ENCODE measurements at regions of chr1 and their contacts with region 1.

Region 1: DNA sequence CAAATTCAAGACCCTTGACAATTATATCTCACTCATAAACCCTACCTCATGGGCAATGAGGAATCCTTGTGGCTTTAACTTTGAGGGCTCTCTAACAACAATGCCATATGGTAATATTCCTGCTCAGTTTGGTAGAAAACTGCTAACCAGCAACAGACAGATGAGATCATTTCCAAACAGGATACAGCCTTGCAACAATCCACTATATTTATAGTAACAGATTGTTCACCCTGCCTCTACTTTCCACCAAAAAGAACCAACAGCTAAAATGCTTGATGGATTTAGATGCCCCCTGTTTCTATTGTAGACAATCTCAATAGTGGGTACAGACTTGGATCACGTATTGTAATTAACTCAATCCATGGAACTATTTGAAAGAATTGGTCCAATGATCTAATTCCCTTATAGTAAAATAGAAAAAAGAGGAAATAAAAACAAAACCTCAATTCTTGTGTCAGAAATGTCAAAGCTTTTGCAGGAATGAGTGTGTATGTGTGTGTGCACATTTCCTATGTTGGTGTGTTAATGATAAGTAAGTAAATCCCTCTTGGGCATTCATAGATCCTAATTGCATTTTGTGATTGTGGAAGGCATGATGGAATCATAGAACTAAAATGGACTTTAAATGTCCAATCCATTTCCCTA is 100.0 kb upstream of the EDEM3 start:
- DNase-seq: no peak
- H3K4me3 ChIP-seq: no peak overlapping the region
- H3K27ac ChIP-seq: no peak overlapping the region
- H3K4me1 ChIP-seq: no peaks in the 10 kb centered on the region
- H3K27me3 ChIP-seq: no peaks in the 10 kb centered on the region
- CTCF ChIP-seq: no peak

Region 2: DNA sequence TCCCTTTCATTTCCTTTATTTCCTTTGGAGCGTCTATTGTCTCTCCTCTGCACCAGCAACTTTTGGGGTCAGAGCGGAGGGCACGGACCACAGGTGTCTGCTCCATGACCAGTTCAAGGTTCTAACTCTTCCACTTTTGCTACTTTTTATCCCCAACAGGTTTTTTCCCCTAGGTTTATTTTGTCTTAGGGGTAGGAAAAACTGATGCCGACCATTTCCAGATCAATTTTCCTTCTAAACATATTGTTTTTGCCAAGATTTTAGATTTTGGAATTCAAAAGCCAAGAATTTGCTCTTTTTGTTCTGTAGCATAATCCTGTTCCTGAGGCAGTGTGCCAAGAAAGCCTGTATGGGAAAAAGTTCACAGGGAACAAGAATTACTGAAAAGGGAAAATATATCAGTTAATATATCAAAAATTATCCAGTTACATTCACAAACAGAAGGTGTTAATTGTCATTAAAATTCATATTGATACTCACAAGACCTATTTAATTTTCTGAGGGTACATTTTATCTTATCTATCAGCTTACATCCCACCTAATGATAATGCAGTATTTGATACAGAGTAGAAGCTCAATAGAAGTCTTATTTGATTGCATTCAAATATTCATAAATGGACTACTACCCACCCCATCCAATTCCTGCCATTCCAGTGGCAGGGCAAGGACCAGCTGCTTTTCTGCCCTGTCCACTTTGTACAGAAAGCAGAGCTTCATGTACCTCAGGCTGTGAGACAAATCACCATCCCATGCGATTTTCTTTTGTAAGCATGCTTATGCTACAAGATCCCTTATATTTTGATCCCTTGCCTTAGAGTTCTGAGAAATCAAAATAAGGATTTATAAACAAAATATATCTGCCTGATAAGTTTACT is 771.8 kb before region 1 on chr1:
- CTCF ChIA-PET with region 1: no interaction called
- POLR2A ChIA-PET with region 1: no interaction called
- intact Hi-C with region 1: no loop called
- DNase-seq: no peak
- H3K4me3 ChIP-seq: no peak overlapping the region
- H3K27ac ChIP-seq: no peak overlapping the region
- H3K4me1 ChIP-seq: peaks cover 13% of the 10 kb centered on the region
- H3K27me3 ChIP-seq: no peaks in the 10 kb centered on the region
- CTCF ChIP-seq: no peak

Region 3: GRCh38 chr1:184838489-184838951 is 16.1 kb before region 1 on chr1:
- CTCF ChIA-PET with region 1: no interaction called
- POLR2A ChIA-PET with region 1: no interaction called
- intact Hi-C with region 1: loop called (anchors 2 kb)
- DNase-seq: peak; percentile 38
- H3K4me3 ChIP-seq: no peak overlapping the region
- H3K27ac ChIP-seq: peak overlapping the region; percentile 1
- H3K4me1 ChIP-seq: peaks cover 9% of the 10 kb centered on the region
- H3K27me3 ChIP-seq: no peaks in the 10 kb centered on the region
- CTCF ChIP-seq: no peak

Region 4: DNA sequence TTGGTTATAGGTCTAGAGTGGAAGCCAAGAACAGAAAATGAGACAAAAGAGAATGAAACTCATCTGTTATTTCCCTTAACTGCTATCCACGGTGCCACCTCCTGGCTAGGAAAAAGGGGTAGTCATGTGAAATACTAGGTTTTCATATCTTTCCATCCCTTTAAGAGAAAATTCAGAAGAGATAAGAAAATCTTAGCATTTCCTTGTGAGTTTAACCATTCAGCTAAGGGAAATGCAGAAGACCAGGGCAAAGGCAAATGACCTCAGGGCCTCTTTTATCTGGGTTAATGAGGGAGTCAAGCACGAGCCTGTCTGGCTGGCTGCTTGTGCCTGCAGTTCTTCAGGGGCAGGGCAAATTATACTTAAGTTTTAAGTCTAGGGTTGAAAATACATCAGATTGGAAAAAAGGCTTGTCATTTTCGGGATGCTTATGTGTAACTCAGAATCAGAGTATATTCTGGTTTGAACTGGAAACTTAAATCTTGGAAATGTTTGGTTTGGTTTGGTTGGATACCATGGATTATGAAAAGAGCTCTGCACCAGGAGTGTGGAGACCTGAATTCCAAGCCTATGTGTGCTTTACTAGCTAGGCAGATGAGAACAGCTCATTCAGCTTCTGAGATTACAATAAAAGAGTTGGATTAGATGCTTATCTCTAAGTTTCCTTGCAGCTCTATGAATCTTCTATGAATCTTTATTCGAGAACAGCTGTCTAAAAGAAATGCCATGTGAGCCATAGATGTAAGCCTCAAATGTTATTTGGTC is 99.8 kb after region 1 on chr1:
- CTCF ChIA-PET with region 1: no interaction called
- POLR2A ChIA-PET with region 1: no interaction called
- intact Hi-C with region 1: no loop called
- DNase-seq: no peak
- H3K4me3 ChIP-seq: no peak overlapping the region
- H3K27ac ChIP-seq: no peak overlapping the region
- H3K4me1 ChIP-seq: peaks cover 46% of the 10 kb centered on the region
- H3K27me3 ChIP-seq: no peaks in the 10 kb centered on the region
- CTCF ChIP-seq: peak; percentile 42